Heart left ventricle (tissue), 16 donors: ENCODE measurements at regions of chr13 and their contacts with region 1.

Region 1: DNA sequence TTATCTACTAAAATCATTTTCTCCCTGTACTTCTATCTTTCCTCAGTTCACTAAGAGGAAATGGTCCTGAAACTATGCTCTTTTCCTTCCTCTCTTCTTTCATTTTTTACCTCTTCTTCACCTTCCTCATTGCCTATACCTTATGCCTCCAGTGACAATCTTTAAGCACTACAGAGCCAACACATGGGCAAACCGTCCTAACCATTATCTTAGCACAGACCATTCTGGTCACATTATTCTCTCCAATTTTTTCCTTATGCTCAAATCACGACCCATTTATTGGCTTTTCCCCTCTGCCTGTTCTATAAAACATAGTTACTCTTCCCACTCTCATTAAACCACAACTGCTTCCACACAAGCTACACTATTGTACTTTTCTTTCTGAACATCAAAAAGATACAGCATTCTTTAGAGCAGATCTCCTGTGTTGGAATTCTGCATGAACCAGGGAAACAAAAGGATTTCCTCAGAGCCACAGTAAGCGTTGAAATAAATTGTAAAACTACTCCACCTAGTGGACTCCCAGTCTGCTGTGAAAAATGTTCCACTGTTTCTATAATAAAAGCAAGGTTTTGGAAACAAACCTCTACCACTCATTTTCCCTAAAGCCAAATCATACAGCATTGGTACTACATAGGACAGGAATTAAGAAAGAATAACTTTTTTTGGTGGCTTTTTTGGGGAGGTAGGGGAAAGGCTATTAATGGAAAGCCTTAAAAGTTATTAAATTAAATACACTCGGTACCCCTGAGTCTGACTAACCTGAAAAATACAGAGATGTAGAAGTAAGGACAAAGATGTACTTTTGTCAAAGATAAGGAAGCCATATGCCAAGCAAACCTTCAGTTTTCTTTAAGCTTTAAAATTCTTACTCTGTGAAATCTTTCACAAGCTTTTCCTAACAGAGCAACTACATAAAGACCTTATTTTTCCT is 19.5 kb downstream of the NUFIP1 start:
- DNase-seq: no peak
- ATAC-seq: peak in 3 of 4 donors; percentile 58 to 70 (median 69)
- H3K4me3 ChIP-seq: no peak overlapping the region
- H3K27ac ChIP-seq: peak overlapping the region in 1 of 12 donors; percentile 20
- H3K4me1 ChIP-seq: peaks cover 0 to 24% (median 6%) of the 10 kb centered on the region in 12 donors
- H3K27me3 ChIP-seq: no peaks in the 10 kb centered on the region
- CTCF ChIP-seq: peak; percentile 69 to 92 (median 82)
- POLR2A ChIP-seq: no peak

Region 2: DNA sequence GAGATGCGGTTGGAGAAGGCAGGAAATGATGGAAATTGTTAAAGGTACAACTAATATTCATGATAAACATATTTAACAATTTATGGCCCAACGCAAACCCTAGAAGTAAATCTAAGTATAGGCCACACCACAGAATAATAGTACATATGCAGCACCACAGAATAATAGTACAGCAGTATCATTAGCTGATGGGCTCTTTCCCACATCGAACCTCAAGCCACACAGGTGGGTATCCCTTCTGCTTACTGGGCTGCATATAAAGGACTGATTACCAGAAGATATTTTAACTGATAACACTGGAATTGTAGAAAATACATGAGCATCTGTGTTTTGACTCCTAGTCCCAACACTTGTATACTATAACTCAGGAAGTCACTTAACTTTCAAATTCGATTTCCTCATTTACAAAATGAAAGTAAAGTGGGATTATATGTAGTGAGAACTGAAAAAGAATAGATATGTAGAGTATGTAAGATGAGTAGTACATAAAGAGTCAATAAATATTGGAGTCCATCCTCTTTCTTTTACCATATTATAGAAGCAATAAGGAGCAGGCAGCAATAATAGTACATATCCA is 485.2 kb before region 1 on chr13:
- intact Hi-C with region 1: loop called (anchors 1 to 2 kb)
- DNase-seq: no peak
- ATAC-seq: no peak
- H3K4me3 ChIP-seq: peak overlapping the region in 7 of 12 donors; percentile 7 to 24 (median 18)
- H3K27ac ChIP-seq: peak overlapping the region in 2 of 12 donors; percentile 7 to 9
- H3K4me1 ChIP-seq: peaks cover 0 to 20% (median 9%) of the 10 kb centered on the region in 12 donors
- H3K27me3 ChIP-seq: no peaks in the 10 kb centered on the region
- CTCF ChIP-seq: no peak
- POLR2A ChIP-seq: no peak

Region 3: GRCh38 chr13:44917589-44918325 is 52.1 kb before region 1 on chr13:
- intact Hi-C with region 1: loop called in 5 of 10 experiments (anchors 2 to 5 kb)
- DNase-seq: peak; percentile 94 to 97 (median 97)
- ATAC-seq: peak; percentile 87 to 93 (median 90)
- H3K4me3 ChIP-seq: peak overlapping the region; percentile 3 to 71 (median 60)
- H3K27ac ChIP-seq: peak overlapping the region; percentile 91 to 98 (median 95)
- H3K4me1 ChIP-seq: peaks cover 0 to 33% (median 23%) of the 10 kb centered on the region in 12 donors
- H3K27me3 ChIP-seq: no peaks in the 10 kb centered on the region
- CTCF ChIP-seq: peak in 8 of 12 donors; percentile 15 to 60 (median 40)
- POLR2A ChIP-seq: peak in 1 of 2 donors; percentile 42

Region 4: DNA sequence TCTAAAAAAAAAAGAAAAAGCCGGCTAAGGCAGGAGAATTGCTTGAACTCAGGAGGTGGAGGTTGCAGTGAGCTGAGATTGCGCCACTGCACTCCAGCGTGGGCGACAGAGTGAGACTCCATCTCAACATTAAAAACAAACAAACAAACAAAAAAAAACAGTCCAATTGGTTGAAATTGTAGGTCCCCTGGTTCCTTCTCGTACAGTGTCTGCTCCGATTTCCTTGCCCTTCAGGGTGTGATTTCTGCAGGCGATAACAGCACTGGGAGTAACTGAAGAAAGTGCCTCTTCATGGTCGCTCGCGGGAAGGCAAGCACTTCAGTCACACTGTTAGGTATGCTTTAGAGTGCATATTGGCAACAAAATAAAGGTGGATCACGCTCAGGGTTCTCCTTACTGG is 331.4 kb after region 1 on chr13:
- intact Hi-C with region 1: loop called in 2 of 10 experiments (anchors 5 to 10 kb)
- DNase-seq: no peak
- ATAC-seq: no peak
- H3K4me3 ChIP-seq: no peak overlapping the region
- H3K27ac ChIP-seq: no peak overlapping the region
- H3K4me1 ChIP-seq: peaks cover 0 to 9% (median 0%) of the 10 kb centered on the region in 12 donors
- H3K27me3 ChIP-seq: no peaks in the 10 kb centered on the region
- CTCF ChIP-seq: no peak
- POLR2A ChIP-seq: no peak